ENCODE measurements at regions of chr16 and their contacts with region 1.

Region 1: DNA sequence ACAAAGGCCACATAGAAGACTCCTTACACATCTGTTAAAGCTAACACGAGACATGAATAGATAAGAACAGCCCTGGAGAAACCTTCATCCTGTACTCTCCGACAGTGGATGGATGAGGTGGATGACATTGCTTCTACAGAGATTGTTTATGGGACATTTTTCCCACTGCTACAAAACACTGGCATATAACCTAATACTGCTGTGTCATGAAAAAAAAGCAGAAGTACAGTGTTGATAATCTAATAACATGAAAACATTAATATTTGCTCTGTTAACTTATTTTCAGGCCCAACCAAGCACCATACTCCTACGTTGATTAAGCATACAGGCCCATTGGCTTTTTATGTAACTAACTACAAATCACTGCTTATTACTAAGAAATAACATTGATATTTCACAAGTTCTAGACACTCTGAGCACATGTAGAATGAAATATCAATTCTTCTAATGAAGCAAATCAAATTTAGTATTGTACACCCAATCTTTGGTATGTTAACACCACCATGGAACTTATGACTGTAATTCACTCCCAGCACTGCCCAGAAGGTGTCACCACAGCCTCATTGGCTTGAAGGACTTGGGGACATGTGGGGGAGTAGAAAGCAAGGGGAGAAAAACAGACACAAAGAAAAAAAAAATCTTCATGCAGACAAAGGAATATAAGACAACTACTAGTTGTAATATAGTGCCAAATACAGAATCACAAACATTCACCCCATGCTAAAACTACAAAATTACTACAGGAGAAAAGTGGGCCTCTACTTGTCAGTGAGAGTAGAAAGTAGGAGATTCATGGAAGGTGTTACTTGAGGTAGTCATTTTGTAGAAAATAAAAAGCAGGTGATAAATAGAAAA is 330.0 kb upstream of the PMFBP1 start:
- DNase-seq: peak; percentile 42
- ATAC-seq: peak; percentile 98
- H3K4me3 ChIP-seq: no peak overlapping the region
- H3K27ac ChIP-seq: no peak overlapping the region
- H3K4me1 ChIP-seq: no peaks in the 10 kb centered on the region
- H3K27me3 ChIP-seq: no peaks in the 10 kb centered on the region
- CTCF ChIP-seq: peak; percentile 82 to 93 (median 86)
- EP300 ChIP-seq: no peak
- POLR2A ChIP-seq: no peak
- RAD21 ChIP-seq: peak; percentile 99

Region 2: GRCh38 chr16:72442385-72443158 is 59.4 kb before region 1 on chr16:
- CTCF ChIA-PET with region 1: no interaction called
- POLR2A ChIA-PET with region 1: no interaction called
- RAD21 ChIA-PET with region 1: no interaction called
- SMC1A ChIA-PET with region 1: no interaction called
- in situ Hi-C with region 1: no loop called
- intact Hi-C with region 1: no loop called
- DNase-seq: no peak
- ATAC-seq: no peak
- H3K4me3 ChIP-seq: no peak overlapping the region
- H3K27ac ChIP-seq: no peak overlapping the region
- H3K4me1 ChIP-seq: no peaks in the 10 kb centered on the region
- H3K27me3 ChIP-seq: no peaks in the 10 kb centered on the region
- CTCF ChIP-seq: no peak
- EP300 ChIP-seq: no peak
- POLR2A ChIP-seq: no peak
- RAD21 ChIP-seq: no peak

Region 3: GRCh38 chr16:72657791-72658190 is 155.8 kb after region 1 on chr16:
- CTCF ChIA-PET with region 1: interaction called, 15 read pairs
- POLR2A ChIA-PET with region 1: no interaction called
- RAD21 ChIA-PET with region 1: interaction called, 21 read pairs
- SMC1A ChIA-PET with region 1: interaction called, 13 read pairs
- in situ Hi-C with region 1: no loop called
- intact Hi-C with region 1: no loop called
- DNase-seq: peak; percentile 82
- ATAC-seq: peak; percentile 91
- H3K4me3 ChIP-seq: peak overlapping the region; percentile 7; the same call in 1 of the 2 replicates
- H3K27ac ChIP-seq: peak overlapping the region; percentile 58; the same call in 1 of the 2 replicates
- H3K4me1 ChIP-seq: peaks cover 24% of the 10 kb centered on the region
- H3K27me3 ChIP-seq: no peaks in the 10 kb centered on the region
- CTCF ChIP-seq: peak in 2 of 3 experiments; percentile 19 to 40; a peak in 2 of 6 replicates
- EP300 ChIP-seq: no peak
- POLR2A ChIP-seq: no peak
- RAD21 ChIP-seq: peak; percentile 51

Region 4: DNA sequence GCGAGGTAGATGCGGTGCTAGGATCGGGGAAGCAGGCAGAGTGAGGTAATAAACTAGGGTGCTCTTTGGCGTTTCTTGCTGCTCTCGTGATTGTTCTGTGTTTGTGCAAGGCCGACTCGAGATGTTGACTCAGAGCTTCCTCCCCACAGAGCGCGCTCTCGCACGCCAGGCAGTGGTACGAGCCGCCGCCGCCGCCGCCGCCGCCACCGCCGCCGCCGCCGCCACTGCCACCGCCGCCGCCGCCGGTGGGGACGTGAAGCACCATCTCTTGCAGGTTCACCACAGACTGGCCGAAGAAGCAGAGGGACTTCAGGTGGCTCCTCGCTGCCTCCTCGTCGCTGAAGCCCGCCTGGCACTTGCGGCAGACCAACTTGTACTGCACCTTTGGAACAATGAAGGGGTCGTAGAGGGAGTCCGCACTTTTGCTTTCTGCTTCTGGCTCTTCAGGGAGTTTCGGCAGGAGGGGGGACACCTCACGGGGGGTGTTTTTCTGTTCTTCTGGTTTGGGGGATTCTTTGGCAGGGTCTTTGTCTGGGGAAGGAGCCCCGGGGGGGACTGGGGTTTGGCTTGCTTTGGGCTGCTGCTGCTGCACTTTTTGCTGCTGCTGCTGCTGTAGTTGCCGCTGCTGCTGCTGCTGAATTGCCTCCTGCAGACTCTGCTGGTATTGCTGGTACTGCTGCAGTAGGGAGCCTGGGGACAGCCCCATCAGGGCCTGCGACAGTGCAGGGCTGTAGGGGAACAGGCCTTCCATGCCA is 285.7 kb after region 1 on chr16:
- CTCF ChIA-PET with region 1: interaction called, 3 read pairs
- POLR2A ChIA-PET with region 1: no interaction called
- RAD21 ChIA-PET with region 1: interaction called, 3 read pairs
- SMC1A ChIA-PET with region 1: interaction called, 3 read pairs
- in situ Hi-C with region 1: no loop called
- intact Hi-C with region 1: loop called (anchors 10 kb)
- DNase-seq: peak; percentile 9
- ATAC-seq: peak; percentile 92
- H3K4me3 ChIP-seq: peak overlapping the region; percentile 41; the same call in 1 of the 2 replicates
- H3K27ac ChIP-seq: peak overlapping the region; percentile 31; the same call in 1 of the 2 replicates
- H3K4me1 ChIP-seq: peaks cover 9% of the 10 kb centered on the region
- H3K27me3 ChIP-seq: no peaks in the 10 kb centered on the region
- CTCF ChIP-seq: no peak
- EP300 ChIP-seq: no peak
- POLR2A ChIP-seq: peak; percentile 69
- RAD21 ChIP-seq: no peak

Region 5: DNA sequence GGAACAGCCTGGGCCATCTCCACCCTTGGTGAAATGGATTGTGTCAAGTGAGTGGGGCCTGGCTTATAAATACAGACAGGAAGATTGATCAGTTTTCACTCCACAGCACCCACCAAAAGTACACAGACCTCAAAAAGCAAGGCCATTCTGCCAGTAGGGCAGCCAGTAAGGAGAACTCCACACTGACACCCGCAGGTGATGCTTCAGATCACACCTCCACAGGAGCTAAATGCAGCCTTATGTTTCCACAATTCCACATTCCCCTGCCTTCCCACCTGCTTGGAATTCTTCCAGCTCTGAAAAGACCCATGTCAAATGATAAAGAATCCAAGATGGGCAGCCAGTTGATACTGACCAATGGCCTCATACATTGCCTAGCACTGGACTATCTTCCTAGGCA is 354.8 kb after region 1 on chr16:
- CTCF ChIA-PET with region 1: interaction called, 16 read pairs
- POLR2A ChIA-PET with region 1: no interaction called
- RAD21 ChIA-PET with region 1: interaction called, 5 read pairs
- SMC1A ChIA-PET with region 1: interaction called, 9 read pairs
- in situ Hi-C with region 1: no loop called
- intact Hi-C with region 1: no loop called
- DNase-seq: no peak
- ATAC-seq: peak; percentile 78
- H3K4me3 ChIP-seq: no peak overlapping the region
- H3K27ac ChIP-seq: no peak overlapping the region
- H3K4me1 ChIP-seq: peaks cover 6% of the 10 kb centered on the region; the same call in 1 of the 2 replicates
- H3K27me3 ChIP-seq: no peaks in the 10 kb centered on the region
- CTCF ChIP-seq: peak; percentile 37 to 42 (median 37); a peak in 4 of 6 replicates
- EP300 ChIP-seq: no peak
- POLR2A ChIP-seq: no peak
- RAD21 ChIP-seq: peak; percentile 38

Region 6: DNA sequence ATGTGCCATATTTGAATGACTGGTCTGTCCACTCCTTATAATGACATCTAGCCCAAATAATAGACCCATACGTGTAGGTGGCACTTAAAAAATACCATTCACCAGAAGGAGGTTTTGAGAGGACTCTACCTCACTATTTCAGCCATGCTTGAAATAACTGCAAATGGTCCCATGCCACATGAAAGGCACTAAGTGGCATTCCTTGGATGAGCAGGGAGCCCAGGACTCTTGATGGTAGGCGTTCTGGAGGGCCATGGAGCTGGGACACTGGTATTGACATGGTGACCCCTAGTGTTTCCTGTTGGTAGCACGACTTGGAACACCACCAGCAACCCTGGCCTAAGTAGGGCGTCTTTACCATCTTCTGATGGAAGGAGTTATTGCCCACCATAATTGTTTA is 694.7 kb after region 1 on chr16:
- CTCF ChIA-PET with region 1: interaction called, 9 read pairs
- POLR2A ChIA-PET with region 1: no interaction called
- RAD21 ChIA-PET with region 1: interaction called, 3 read pairs
- SMC1A ChIA-PET with region 1: interaction called, 5 read pairs
- in situ Hi-C with region 1: loop called (anchors 10 kb)
- intact Hi-C with region 1: loop called (anchors 2 kb)
- DNase-seq: peak; percentile 24
- ATAC-seq: peak; percentile 98
- H3K4me3 ChIP-seq: no peak overlapping the region
- H3K27ac ChIP-seq: no peak overlapping the region
- H3K4me1 ChIP-seq: no peaks in the 10 kb centered on the region
- H3K27me3 ChIP-seq: no peaks in the 10 kb centered on the region
- CTCF ChIP-seq: peak; percentile 63 to 82 (median 78)
- EP300 ChIP-seq: no peak
- POLR2A ChIP-seq: no peak
- RAD21 ChIP-seq: peak; percentile 78